Naive thymus-derived CD4-positive, alpha-beta T cell (primary cell): ENCODE measurements at regions of chr16 and their contacts with region 1.

Region 1: DNA sequence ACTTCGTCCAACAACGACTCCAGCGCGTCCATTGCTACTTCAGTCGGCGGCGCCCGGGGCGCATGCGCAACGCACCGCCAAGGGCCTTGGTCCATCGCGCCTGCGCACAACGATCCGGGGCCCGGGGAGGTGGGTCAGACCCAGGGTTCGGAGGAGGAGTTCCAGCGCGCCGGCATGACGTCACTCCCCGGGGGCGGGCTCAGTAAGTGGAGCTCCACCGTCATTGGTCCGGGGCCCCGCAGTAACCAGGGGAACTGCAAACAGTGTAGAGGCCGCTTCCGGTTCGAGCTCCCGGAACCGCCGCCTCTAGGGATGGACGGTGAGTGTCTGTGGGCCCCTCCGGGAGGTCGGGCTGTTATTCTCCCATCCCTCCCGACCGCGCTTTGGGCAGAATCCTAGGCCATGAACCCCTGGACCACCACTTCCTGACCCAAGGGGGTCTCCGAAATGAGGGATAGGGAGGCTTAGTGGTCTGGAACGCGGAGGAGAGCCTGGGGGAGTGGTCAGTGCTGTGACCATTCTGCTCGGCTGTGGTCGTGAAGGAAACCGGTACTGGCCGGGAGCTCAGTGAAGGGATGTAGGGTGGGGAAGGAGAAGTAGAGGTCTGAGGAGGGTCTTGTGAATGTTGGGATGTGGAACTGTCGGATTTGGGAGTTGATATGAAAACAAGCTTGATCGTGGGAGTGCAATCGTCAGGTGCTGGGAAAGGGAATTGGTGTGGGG is at the starts of genes GTF3C1 and KATNIP:
- DNase-seq: peak; percentile 100
- ATAC-seq: peak; percentile 100
- H3K4me3 ChIP-seq: peak within 1 kb of the TSS; percentile 100
- H3K4me3 Mint-ChIP-seq: peak within 1 kb of the TSS; percentile 95 to 98 (median 97)
- H3K27ac ChIP-seq: peak within 1 kb of the TSS; percentile 85
- H3K27ac Mint-ChIP-seq: peak within 1 kb of the TSS; percentile 94 to 99 (median 98)
- H3K4me1 ChIP-seq: peaks cover 21 to 22% of the 10 kb centered on the region in 2 donors
- H3K4me1 Mint-ChIP-seq: peaks cover 26 to 51% (median 44%) of the 10 kb centered on the region in 7 donors
- H3K27me3 ChIP-seq: no peaks in the 10 kb centered on the region
- H3K27me3 Mint-ChIP-seq: peaks cover 0 to 2% (median 0%) of the 10 kb centered on the region in 5 donors
- total RNA-seq, gene GTF3C1: 51.8 to 60.0 (median 52.6) TPM
- total RNA-seq, gene KATNIP: 18.7 to 39.0 (median 21.3) TPM

Region 2: DNA sequence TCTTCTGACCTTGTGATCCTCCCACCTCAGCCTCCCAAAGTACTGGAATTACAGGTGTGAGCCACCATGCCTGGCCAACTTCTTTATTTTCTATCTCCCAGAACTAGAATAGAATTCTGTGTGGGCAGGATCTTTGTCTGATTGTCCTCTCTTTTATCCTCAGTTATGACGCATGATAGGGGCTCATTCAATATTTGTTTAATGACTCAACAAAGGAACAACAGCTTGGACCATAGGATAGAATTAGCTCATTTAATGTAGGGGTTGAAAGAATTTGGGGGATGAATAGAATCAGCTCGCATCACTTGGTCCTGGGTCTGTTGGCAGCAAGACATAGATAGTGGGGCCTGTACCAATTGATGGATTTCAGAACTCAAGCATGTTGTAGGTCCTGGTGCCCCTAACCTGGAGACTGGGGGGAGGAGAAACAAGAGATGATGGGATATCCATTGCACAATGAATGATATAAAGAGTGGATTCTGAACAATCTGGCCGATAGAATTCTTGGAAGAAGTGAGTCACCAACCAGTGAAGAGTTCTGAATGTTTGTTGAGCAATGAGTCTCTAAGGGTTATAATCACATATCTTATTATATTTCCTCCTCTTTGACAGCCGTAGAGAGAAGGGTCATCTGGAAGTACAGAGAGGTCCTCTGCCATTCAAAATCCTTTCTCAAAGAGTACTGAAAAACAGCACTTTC is 1608.1 kb before region 1 on chr16:
- CTCF ChIA-PET with region 1: no interaction called
- POLR2A ChIA-PET with region 1: no interaction called
- intact Hi-C with region 1: no loop called
- DNase-seq: no peak
- ATAC-seq: no peak
- H3K4me3 ChIP-seq: no peak overlapping the region
- H3K4me3 Mint-ChIP-seq: no peak overlapping the region
- H3K27ac ChIP-seq: no peak overlapping the region
- H3K27ac Mint-ChIP-seq: no peak overlapping the region
- H3K4me1 ChIP-seq: no peaks in the 10 kb centered on the region
- H3K4me1 Mint-ChIP-seq: no peaks in the 10 kb centered on the region
- H3K27me3 ChIP-seq: no peaks in the 10 kb centered on the region
- H3K27me3 Mint-ChIP-seq: peaks cover 0 to 23% (median 10%) of the 10 kb centered on the region in 5 donors

Region 3: DNA sequence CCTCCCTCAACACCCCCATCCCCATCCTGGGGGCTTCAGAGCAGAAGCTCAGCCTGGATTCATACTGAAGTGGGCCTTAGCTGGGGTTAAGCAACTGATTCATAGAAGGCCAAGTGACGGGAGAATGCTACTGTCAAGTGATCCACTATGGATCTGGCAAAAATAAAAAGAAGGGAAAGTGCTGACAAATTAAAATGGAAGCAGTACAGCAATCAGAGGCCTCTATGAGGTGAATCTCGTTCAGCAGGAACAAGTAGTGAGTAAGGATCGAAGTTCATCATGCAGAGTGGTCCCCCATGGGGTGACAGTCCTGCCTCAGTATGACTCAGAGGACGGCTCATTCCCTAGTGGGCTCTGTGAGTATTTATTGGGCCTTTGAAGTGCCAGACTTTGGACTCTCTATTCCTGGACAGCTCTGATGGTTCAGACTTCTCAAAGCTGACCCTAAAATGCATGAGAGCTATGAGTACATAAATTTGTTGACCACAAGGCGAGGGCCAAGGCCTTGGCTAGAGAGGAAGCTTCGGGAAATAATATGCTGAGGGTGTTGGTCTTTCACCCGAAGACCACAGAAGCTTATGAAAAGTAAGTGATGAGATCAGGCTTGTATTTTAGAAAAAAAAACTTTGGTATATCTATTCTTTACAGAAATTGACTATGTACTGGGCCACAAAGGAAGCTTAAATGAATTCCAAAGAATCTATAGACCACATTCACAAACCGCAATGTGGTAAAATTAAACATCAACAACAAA is 276.2 kb before region 1 on chr16:
- CTCF ChIA-PET with region 1: no interaction called
- POLR2A ChIA-PET with region 1: no interaction called
- intact Hi-C with region 1: loop called in 1 of 2 experiments (anchors 1 kb)
- DNase-seq: peak in 7 of 9 donors; percentile 44 to 75 (median 56)
- ATAC-seq: peak; percentile 79
- H3K4me3 ChIP-seq: peak overlapping the region; percentile 15
- H3K4me3 Mint-ChIP-seq: peak overlapping the region; percentile 49 to 88 (median 74)
- H3K27ac ChIP-seq: peak overlapping the region; percentile 63
- H3K27ac Mint-ChIP-seq: peak overlapping the region; percentile 48 to 95 (median 88)
- H3K4me1 ChIP-seq: peaks cover 9 to 30% of the 10 kb centered on the region in 2 donors
- H3K4me1 Mint-ChIP-seq: peaks cover 25 to 77% (median 65%) of the 10 kb centered on the region in 7 donors
- H3K27me3 ChIP-seq: no peaks in the 10 kb centered on the region
- H3K27me3 Mint-ChIP-seq: peaks cover 0 to 4% (median 0%) of the 10 kb centered on the region in 5 donors

Region 4: DNA sequence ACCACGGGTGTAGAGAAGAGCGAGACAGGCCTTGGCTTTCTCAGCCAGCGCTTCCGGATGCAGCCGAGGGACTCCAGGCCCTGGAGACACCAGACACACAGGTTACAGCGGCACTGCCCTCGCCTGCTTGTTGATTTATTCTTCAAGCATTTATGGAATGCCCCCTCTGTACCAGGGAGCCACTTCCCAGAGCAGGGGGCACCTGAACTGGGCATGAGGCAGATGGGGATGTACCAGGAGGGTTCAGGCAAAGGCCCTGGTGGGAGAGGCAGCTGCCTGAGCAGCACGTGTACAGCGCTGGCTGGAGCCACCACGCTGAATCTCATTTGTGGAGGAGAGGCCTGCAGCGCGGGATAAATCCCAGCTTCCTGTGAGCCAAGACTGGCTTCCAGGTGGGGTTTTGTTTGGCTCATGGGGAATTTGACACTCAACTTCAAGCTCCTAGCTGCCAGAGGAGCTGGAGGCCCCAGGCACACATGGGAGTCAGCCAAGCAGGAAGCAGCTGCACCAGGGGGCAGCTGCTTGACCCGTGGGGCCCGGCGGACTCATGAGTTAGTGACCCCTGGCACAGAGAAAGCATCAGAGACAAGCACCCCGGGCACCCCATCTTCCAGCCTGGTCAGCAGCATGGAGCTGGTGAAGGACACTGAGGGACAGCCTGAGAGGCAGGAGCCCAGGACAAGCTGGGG is 88.4 kb before region 1 on chr16:
- CTCF ChIA-PET with region 1: no interaction called
- POLR2A ChIA-PET with region 1: no interaction called
- intact Hi-C with region 1: loop called in 1 of 2 experiments (anchors 2 kb)
- DNase-seq: no peak
- ATAC-seq: no peak
- H3K4me3 ChIP-seq: no peak overlapping the region
- H3K4me3 Mint-ChIP-seq: no peak overlapping the region
- H3K27ac ChIP-seq: no peak overlapping the region
- H3K27ac Mint-ChIP-seq: peak overlapping the region in 8 of 9 donors; percentile 16 to 64 (median 44)
- H3K4me1 ChIP-seq: peaks cover 40 to 60% of the 10 kb centered on the region in 2 donors
- H3K4me1 Mint-ChIP-seq: peaks cover 24 to 75% (median 39%) of the 10 kb centered on the region in 7 donors
- H3K27me3 ChIP-seq: no peaks in the 10 kb centered on the region
- H3K27me3 Mint-ChIP-seq: no peaks in the 10 kb centered on the region